Breast epithelium (tissue), 4 donors: ENCODE measurements at regions of chr1 and their contacts with region 1.

Region 1: GRCh38 chr1:39098546-39099250 is 72.5 kb downstream of the NDUFS5 start:
- DNase-seq: peak in 1 of 2 donors; percentile 49
- H3K4me3 ChIP-seq: no peak overlapping the region
- H3K27ac ChIP-seq: peak overlapping the region in 1 of 2 donors; percentile 19
- H3K4me1 ChIP-seq: no peaks in the 10 kb centered on the region
- H3K27me3 ChIP-seq: no peaks in the 10 kb centered on the region
- CTCF ChIP-seq: peak; percentile 27 to 66 (median 64)
- POLR2A ChIP-seq: no peak

Region 2: GRCh38 chr1:39129514-39129913 is 30.8 kb after region 1 on chr1:
- intact Hi-C with region 1: loop called (anchors 2 kb)
- DNase-seq: no peak
- H3K4me3 ChIP-seq: no peak overlapping the region
- H3K27ac ChIP-seq: peak overlapping the region; percentile 87 to 93
- H3K4me1 ChIP-seq: peaks cover 11 to 42% of the 10 kb centered on the region in 2 donors
- H3K27me3 ChIP-seq: no peaks in the 10 kb centered on the region
- CTCF ChIP-seq: peak in 1 of 3 donors; percentile 14
- POLR2A ChIP-seq: no peak

Region 3: DNA sequence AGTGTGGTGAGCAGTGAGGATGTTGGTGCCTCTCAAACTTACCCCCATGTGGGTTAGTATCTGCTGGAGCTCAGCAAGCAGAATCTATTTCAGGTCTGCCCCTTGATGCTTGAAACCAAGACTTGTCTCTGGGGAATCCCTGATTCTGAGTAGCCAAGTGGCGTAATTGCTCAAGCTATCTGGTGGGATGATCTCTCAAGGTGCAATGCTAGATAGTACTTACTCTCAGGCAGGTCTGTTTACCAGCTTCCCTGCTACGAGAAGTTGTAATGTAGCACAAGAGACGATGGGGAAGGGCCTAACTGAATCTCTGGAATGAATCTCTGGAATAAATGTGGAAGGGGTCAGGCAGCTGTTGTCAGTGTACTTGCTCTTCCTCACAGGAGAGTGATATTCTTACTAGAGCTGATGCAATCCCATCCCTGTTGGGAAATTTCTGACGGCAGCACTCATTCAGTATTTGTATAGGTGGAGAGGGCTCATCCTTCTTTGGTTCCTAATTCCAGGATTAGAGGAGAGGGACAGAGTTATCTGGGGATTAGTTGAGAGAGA is 171.2 kb after region 1 on chr1:
- intact Hi-C with region 1: loop called (anchors 5 kb)
- DNase-seq: no peak
- H3K4me3 ChIP-seq: peak overlapping the region in 2 of 3 donors; percentile 42 to 58
- H3K27ac ChIP-seq: peak overlapping the region; percentile 81 to 84
- H3K4me1 ChIP-seq: peaks cover 0 to 10% of the 10 kb centered on the region in 2 donors
- H3K27me3 ChIP-seq: no peaks in the 10 kb centered on the region
- CTCF ChIP-seq: no peak
- POLR2A ChIP-seq: no peak